ENCODE measurements at regions of chr2 and their contacts with region 1.

Region 1: GRCh38 chr2:177392373-177393202 is at the start of gene AGPS:
- H3K4me3 Mint-ChIP-seq: peak within 1 kb of the TSS; percentile 94
- H3K27ac Mint-ChIP-seq: peak within 1 kb of the TSS; percentile 93
- H3K4me1 Mint-ChIP-seq: peaks cover 66% of the 10 kb centered on the region
- H3K27me3 Mint-ChIP-seq: no peaks in the 10 kb centered on the region

Region 2: GRCh38 chr2:177254433-177255226 is 138.0 kb before region 1 on chr2:
- intact Hi-C with region 1: loop called (anchors 10 kb)
- H3K4me3 Mint-ChIP-seq: no peak overlapping the region
- H3K27ac Mint-ChIP-seq: peak overlapping the region; percentile 55
- H3K4me1 Mint-ChIP-seq: peaks cover 85% of the 10 kb centered on the region
- H3K27me3 Mint-ChIP-seq: no peaks in the 10 kb centered on the region

Region 3: GRCh38 chr2:177338177-177338721 is 54.3 kb before region 1 on chr2:
- intact Hi-C with region 1: no loop called
- H3K4me3 Mint-ChIP-seq: no peak overlapping the region
- H3K27ac Mint-ChIP-seq: no peak overlapping the region
- H3K4me1 Mint-ChIP-seq: peaks cover 20% of the 10 kb centered on the region
- H3K27me3 Mint-ChIP-seq: no peaks in the 10 kb centered on the region

Region 4: GRCh38 chr2:177552422-177553175 is 160.0 kb after region 1 on chr2:
- intact Hi-C with region 1: loop called (anchors 5 kb)
- H3K4me3 Mint-ChIP-seq: peak overlapping the region; percentile 87
- H3K27ac Mint-ChIP-seq: peak overlapping the region; percentile 99
- H3K4me1 Mint-ChIP-seq: peaks cover 10% of the 10 kb centered on the region
- H3K27me3 Mint-ChIP-seq: no peaks in the 10 kb centered on the region

Region 5: DNA sequence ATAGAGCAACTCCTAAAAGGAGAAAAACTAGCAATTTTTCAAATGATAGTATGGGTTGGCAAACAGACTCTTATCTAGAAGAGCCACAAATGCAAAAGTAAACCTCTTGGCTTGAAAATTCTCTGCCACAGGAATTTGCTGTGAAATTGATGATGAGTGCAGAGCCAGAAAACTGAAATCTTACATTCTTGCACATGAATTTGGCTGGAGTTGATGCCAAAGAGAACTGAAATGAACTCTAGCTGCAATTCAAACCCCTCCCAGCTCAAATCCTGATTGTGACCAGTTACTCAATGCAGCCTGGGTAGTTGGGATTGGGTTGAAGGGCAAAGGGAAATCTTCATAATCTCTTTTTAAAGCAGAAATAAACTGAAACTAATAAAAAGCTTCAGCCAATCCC is 413.4 kb after region 1 on chr2:
- intact Hi-C with region 1: no loop called
- H3K4me3 Mint-ChIP-seq: no peak overlapping the region
- H3K27ac Mint-ChIP-seq: no peak overlapping the region
- H3K4me1 Mint-ChIP-seq: no peaks in the 10 kb centered on the region
- H3K27me3 Mint-ChIP-seq: no peaks in the 10 kb centered on the region